Left colon (tissue), 2 donors: ENCODE measurements at regions of chr13 and their contacts with region 1.

Region 1: GRCh38 chr13:31424117-31424729 is 224.4 kb downstream of the B3GLCT start:
- DNase-seq: peak; percentile 63 to 81
- ATAC-seq: peak; percentile 96

Region 2: DNA sequence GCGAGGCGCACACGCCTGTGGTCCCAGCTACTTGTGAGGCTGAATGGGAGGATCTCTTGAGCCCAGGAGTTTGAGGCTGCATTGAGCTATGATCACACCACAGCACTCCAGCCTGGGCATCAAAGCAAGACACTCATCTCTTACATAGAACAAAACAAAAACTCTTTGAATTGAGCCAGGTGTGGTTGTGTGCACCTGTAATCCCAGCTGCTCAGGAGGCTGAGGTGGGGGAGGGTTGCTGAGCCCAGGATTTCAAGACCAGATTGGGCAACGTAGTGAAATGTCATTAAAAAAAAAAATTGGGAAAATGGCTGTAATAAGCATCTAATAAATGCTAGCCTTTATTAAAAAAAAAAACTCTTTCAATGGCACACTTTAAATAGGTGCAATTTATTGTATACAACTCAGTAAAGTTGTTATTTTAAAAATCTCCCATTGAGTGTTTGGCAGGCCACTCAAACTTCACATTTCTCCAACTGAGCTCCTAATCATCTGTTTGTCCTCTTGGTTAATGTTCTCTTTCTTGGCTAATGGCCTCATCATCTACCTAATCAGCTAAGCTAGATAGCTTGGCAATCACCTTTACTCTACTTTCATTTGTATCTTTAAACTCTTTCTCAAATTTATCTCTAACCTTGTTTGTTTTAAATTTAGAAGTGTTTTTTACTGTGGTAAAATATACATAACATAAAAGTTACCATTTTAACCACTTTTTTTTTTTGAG is 930.4 kb before region 1 on chr13:
- intact Hi-C with region 1: no loop called
- DNase-seq: no peak
- ATAC-seq: no peak

Region 3: DNA sequence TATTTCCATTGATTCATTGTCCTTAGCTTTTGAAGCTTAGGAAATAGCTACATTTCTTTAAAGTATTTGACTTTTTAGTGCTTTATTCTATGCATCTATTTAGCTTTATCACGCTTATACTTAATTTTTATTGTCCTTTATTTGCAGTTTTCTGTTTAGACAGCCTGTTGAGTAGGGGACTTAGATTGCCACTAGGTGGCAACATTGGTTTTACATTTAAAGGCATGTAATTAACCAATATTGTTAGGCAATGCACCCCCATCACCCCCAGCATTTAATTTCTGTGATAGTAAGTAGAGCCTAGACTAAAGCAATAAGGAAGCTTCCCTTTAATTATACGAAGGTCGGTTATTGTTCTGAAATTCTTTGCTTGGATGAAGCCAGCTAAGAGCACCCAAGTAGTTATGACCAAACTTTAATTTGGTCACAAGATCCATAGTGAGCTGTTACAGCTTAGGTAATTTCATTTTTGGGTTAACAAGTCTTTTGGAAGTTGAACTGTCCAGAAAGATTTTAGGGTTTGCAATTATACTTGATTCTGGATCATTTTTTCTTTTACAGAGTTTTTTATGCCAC is 187.9 kb before region 1 on chr13:
- intact Hi-C with region 1: loop called in 1 of 2 experiments (anchors 5 kb)
- DNase-seq: no peak
- ATAC-seq: peak; percentile 82